ENCODE measurements at regions of chr12 and their contacts with region 1.

Region 1: GRCh38 chr12:48197971-48198671 is 5.0 kb downstream of the OR10AD1 start:
- DNase-seq: peak; percentile 79 to 99 (median 94)
- H3K4me3 ChIP-seq: peak overlapping the region; percentile 53 to 98 (median 76)
- H3K27ac ChIP-seq: peak overlapping the region; percentile 61 to 99 (median 96)
- H3K27me3 ChIP-seq: peaks cover 0 to 5% (median 0%) of the 10 kb centered on the region in 45 donors
- CTCF ChIP-seq: peak in 22 of 56 donors; percentile 0 to 47 (median 16)

Region 2: GRCh38 chr12:47963340-47964040 is 234.6 kb before region 1 on chr12 and contains the start of gene TMEM106C:
- intact Hi-C with region 1: no loop called
- DNase-seq: peak; percentile 75 to 91 (median 86)
- H3K4me3 ChIP-seq: peak within 1 kb of the TSS; percentile 48 to 98 (median 85)
- H3K27ac ChIP-seq: peak within 1 kb of the TSS in 13 of 59 donors; percentile 6 to 83 (median 39)
- H3K27me3 ChIP-seq: peaks cover 0 to 19% (median 0%) of the 10 kb centered on the region in 45 donors
- CTCF ChIP-seq: peak; percentile 84 to 99 (median 96)
- total RNA-seq, gene TMEM106C: 21.4 to 75.3 (median 46.1) TPM

Region 3: DNA sequence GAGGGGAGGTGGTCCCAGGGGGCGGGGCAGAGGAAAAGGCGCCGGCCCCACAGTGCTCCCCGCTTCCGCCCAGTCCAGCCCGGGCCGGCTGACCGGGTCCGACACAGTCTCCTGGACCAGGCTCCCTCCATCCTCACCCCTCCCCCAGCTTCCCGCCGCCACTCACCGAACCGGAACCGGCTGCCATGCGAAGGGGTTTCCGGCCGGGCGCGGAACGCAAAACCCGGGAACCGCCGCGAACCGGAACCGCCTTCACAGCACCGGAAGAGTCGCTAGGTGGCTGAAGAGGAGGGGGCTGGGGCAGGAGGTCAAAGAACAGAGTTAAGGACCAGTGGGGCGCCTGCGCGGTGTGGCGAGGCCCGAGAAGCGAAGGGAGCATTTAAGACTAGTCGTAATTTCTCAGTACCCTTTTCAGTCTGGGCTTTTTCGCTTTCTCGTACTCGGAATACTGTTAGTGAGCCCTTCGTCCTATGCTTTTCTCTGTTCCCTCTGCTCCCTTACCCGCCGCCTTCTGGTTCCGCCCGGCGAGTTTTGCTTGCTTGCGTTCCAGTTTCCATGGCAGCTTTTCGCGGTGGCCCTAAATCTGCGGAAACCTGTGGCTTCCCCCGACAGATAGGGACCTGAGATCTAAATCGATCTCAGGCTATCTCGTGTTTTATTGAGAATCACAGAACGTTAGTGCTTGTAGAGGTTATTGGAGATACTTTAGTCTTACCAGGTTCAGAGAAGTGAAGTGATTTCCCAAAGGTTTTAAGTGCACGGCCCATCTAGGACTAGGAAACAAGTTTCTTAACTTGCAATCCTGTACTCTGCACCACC is 92.0 kb before region 1 on chr12 and contains the start of gene SENP1:
- intact Hi-C with region 1: loop called in 1 of 2 experiments (anchors 5 kb)
- DNase-seq: peak; percentile 79 to 93 (median 90)
- H3K4me3 ChIP-seq: peak within 1 kb of the TSS; percentile 56 to 99 (median 92)
- H3K27ac ChIP-seq: peak within 1 kb of the TSS; percentile 83 to 99 (median 95)
- H3K27me3 ChIP-seq: peaks cover 0 to 13% (median 0%) of the 10 kb centered on the region in 45 donors
- CTCF ChIP-seq: peak in 53 of 56 donors; percentile 16 to 74 (median 47)
- total RNA-seq, gene SENP1: 8.3 to 29.6 (median 18.5) TPM

Region 4: DNA sequence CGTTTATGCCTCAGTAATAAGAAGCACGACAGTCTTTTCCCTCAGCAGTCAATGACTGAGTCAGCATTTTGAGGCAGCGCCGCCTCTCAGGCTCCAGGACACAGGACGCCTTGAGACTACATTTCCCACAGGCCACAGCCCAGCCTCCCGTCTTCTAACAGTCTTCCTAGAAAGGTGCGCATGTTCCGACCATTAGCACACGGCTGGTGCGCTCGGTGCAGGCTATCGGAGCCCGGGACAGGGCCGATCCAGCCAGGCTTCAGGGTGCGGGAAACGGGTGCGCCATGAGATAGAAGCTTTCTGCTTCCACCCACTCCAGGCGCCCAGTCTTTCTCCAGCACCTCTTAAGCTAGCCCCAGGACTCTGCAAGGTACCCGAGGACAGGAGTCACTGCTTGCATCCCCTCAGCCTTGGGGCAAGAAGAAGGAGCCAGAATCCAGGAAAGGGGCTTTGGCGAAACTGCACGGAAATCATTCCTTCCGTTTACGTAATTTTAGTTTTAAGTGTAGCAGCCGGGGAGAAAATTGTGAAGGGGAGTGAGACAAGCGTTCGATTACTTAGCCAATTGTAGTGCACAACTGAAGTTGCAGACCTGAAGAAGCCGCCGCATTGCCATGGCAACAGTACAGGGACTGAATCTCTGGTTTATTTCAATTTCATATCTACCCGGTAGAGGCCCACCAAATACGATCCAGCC is 98.6 kb after region 1 on chr12:
- intact Hi-C with region 1: loop called in 1 of 2 experiments (anchors 5 kb)
- DNase-seq: peak; percentile 46 to 91 (median 80)
- H3K4me3 ChIP-seq: peak overlapping the region; percentile 29 to 80 (median 63)
- H3K27ac ChIP-seq: peak overlapping the region in 47 of 59 donors; percentile 1 to 86 (median 65)
- H3K27me3 ChIP-seq: no peaks in the 10 kb centered on the region
- CTCF ChIP-seq: peak in 2 of 56 donors; percentile 10 to 31

Region 5: DNA sequence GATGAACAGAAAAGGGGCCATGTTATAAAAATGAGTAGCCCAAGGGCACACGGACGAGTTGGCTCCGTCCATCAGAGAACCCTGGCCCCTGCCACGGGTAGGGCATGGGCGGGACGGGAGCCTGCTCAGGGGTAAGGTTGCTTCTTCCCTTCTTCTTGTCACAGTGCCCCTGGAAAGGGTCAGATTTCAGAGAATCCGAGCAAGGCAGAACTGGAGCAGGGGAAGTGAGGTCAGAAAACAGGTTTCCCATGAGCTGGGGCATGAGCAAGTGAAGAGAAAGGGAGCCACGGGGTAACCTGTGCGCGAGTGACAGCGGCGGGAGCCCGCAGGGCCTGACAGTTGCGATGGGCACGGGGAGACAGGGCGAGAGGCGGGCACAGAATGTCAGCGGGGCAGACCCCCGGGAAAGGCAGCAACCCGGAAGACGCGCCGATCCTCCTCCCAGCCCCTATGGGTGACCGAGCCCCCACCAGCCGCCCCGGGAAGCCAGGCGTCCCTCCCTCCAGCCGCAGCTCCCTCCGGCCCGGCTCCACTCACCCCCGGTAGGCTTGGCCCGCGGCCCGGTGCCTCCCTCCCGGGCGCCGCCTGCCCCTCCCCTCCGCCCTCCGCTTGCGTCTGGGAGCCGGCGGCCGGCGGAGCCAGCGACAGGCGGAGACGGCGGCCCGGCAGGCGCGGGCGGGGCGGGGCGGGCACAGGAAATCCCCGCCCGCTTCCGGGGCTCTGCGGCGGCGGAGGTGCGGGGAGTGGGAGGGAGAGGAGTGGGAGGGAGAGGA is 152.3 kb after region 1 on chr12 and contains the start of gene ZNF641:
- intact Hi-C with region 1: loop called in 1 of 2 experiments (anchors 1 kb)
- DNase-seq: peak; percentile 45 to 87 (median 70)
- H3K4me3 ChIP-seq: peak within 1 kb of the TSS; percentile 47 to 96 (median 85)
- H3K27ac ChIP-seq: peak within 1 kb of the TSS; percentile 83 to 99 (median 97)
- H3K27me3 ChIP-seq: no peaks in the 10 kb centered on the region
- CTCF ChIP-seq: peak in 5 of 56 donors; percentile 12 to 40 (median 18)
- total RNA-seq, gene ZNF641: 14.7 to 40.6 (median 27.1) TPM

Region 6: GRCh38 chr12:48454667-48455066 is 256.5 kb after region 1 on chr12:
- intact Hi-C with region 1: loop called in 1 of 2 experiments (anchors 10 kb)
- DNase-seq: no peak
- H3K4me3 ChIP-seq: no peak overlapping the region
- H3K27ac ChIP-seq: no peak overlapping the region
- H3K27me3 ChIP-seq: no peaks in the 10 kb centered on the region
- CTCF ChIP-seq: peak in 55 of 56 donors; percentile 21 to 70 (median 45)

Measured in dorsolateral prefrontal cortex (tissue), 120 donors.